MCF 10A (cell line): ENCODE measurements at regions of chr4 and their contacts with region 1.

Region 1: DNA sequence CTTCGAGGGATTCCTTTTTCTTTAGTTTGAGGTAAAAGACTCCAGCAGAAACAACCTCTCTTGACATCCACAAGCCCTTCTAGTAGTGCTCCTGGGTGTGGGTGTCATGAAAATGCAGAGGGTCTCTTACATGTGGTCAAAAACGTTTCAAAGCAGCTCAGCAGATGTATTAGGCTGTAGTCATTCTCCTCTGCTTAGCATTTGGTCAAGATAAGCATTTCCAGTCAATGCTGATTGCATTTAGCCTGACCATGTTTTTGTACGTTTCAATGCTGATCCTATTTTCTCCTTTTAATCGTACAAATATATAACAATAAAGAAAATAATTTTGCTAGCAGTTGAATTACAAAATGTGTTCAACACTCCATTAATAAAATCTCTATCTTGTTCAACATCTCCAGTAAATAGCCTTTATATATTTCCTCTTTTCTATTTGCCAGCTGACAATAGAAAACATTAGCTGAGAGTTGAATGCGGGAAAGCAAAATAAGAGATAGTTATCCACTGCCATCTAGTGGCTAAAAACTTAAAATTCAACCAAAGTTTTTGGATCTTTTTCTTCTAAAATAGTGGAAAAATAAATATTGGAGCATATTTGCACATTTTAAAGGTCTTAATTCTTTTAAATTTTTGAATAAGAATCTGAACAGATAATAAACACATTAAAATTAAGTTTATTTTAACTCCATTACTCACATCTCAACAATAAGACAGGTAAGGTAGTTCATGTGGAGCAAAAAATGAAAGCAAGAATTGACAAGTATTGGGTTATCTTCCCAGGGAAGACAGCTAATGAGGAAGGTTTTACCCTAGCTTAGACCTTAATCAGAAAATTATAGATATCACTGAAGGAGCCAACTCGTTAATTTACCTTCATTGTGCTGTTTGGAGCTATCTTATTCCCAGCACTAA is 15.2 kb upstream of the PACRGL start:
- DNase-seq: peak; percentile 40
- H3K4me3 Mint-ChIP-seq: no peak overlapping the region
- H3K27ac Mint-ChIP-seq: no peak overlapping the region
- H3K4me1 Mint-ChIP-seq: no peaks in the 10 kb centered on the region
- H3K27me3 Mint-ChIP-seq: peaks cover 16% of the 10 kb centered on the region
- CTCF ChIP-seq: peak; percentile 53

Region 2: DNA sequence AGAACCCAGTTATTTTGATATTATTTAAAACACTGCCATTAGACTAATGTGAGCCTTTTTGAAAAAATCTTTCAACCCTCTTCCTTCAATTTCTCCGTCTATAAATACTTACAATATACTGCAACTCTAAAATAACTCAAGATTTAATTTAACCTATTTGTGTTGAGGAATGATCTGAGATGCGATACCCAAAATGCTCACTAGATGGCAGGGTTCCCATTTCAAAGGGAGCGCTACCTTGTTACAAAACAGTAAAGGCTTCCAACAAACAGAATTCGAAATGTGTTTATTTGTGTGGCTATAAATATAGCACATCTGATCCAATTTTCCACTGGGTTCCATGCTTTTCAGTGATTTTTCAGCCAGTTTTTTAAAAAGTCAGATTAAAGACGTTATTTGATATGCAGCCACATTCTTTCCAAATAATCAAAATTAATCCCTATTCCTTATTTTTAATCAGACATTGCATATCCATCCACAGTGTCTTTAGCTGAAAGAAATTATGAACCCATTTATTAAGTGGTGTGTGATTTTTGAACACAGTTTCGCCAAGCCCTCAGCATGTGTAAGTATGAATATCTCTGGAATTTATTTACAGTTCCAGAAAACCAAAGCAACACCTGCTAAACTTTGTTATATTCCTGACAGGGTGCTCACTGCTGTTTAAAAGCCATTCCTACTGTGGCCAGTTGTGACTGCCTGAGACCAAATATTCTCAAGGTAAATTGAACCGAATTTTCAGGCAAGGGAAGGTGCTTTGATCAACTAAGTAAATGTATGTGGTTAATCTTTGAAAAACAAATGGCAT is 1995.6 kb before region 1 on chr4:
- CTCF ChIA-PET with region 1: no interaction called
- POLR2A ChIA-PET with region 1: no interaction called
- intact Hi-C with region 1: loop called (anchors 10 kb)
- DNase-seq: peak; percentile 73
- H3K4me3 Mint-ChIP-seq: no peak overlapping the region
- H3K27ac Mint-ChIP-seq: no peak overlapping the region
- H3K4me1 Mint-ChIP-seq: peaks cover 10% of the 10 kb centered on the region
- H3K27me3 Mint-ChIP-seq: no peaks in the 10 kb centered on the region
- CTCF ChIP-seq: peak; percentile 80

Region 3: GRCh38 chr4:20299515-20299914 is 385.6 kb before region 1 on chr4:
- CTCF ChIA-PET with region 1: interaction called, 3 read pairs
- POLR2A ChIA-PET with region 1: no interaction called
- intact Hi-C with region 1: loop called (anchors 5 kb)
- DNase-seq: peak; percentile 42
- H3K4me3 Mint-ChIP-seq: no peak overlapping the region
- H3K27ac Mint-ChIP-seq: no peak overlapping the region
- H3K4me1 Mint-ChIP-seq: no peaks in the 10 kb centered on the region
- H3K27me3 Mint-ChIP-seq: no peaks in the 10 kb centered on the region
- CTCF ChIP-seq: peak; percentile 34

Region 4: DNA sequence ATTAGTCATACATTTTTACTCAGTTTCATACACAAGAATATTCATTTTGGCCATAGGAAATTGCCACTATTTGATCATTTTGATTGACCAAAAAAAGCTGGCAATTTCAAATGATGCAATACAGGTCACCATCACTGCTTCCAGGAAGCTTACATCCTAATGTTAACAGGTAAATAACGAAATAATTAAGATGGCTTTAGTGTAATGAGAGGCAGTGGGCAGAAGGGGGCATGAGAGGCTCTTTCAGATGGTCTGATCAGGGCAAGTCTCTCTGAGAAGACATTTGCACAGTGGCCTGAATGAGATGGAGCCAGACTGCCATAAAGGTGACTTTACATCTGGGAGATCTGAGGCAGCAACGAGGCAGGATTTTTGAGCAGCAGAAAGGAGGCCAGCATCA is 262.7 kb before region 1 on chr4:
- CTCF ChIA-PET with region 1: interaction called, 55 read pairs
- POLR2A ChIA-PET with region 1: no interaction called
- intact Hi-C with region 1: loop called (anchors 1 kb)
- DNase-seq: peak; percentile 66
- H3K4me3 Mint-ChIP-seq: no peak overlapping the region
- H3K27ac Mint-ChIP-seq: no peak overlapping the region
- H3K4me1 Mint-ChIP-seq: peaks cover 6% of the 10 kb centered on the region
- H3K27me3 Mint-ChIP-seq: no peaks in the 10 kb centered on the region
- CTCF ChIP-seq: peak; percentile 61

Region 5: GRCh38 chr4:20672262-20672661 is 12.8 kb before region 1 on chr4:
- CTCF ChIA-PET with region 1: interaction called, 15 read pairs
- POLR2A ChIA-PET with region 1: interaction called, 3 read pairs
- intact Hi-C with region 1: no loop called
- DNase-seq: no peak
- H3K4me3 Mint-ChIP-seq: no peak overlapping the region
- H3K27ac Mint-ChIP-seq: no peak overlapping the region
- H3K4me1 Mint-ChIP-seq: no peaks in the 10 kb centered on the region
- H3K27me3 Mint-ChIP-seq: no peaks in the 10 kb centered on the region
- CTCF ChIP-seq: no peak

Region 6: DNA sequence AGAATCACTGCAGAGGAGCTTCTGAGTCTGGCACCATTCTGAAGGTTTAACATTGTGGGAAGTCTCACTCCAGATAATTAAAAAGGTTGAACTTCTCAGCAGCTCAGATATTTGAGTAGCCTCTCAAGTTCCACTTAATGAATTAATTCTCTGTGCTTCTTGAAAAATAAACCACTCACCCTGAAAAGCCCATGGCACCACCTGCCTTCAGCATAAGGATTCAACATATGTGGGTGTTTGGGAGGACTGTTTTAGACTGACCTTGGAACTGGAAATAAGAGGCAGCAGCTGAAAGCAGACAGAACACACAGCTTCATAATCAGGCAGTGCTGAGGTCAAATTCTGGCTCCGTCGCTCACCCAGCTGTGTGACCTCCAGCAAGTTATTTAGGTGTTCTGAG is 1162.9 kb after region 1 on chr4:
- CTCF ChIA-PET with region 1: no interaction called
- POLR2A ChIA-PET with region 1: no interaction called
- intact Hi-C with region 1: no loop called
- DNase-seq: no peak
- H3K4me3 Mint-ChIP-seq: no peak overlapping the region
- H3K27ac Mint-ChIP-seq: no peak overlapping the region
- H3K4me1 Mint-ChIP-seq: peaks cover 6% of the 10 kb centered on the region
- H3K27me3 Mint-ChIP-seq: no peaks in the 10 kb centered on the region
- CTCF ChIP-seq: no peak